ENCODE measurements at regions of chr21 and their contacts with region 1.

Region 1: GRCh38 chr21:33199516-33200217 is 30.1 kb upstream of the IFNAR2 start:
- DNase-seq: peak; percentile 94
- H3K4me3 ChIP-seq: no peak overlapping the region
- H3K27ac ChIP-seq: peak overlapping the region; percentile 45
- H3K4me1 ChIP-seq: peaks cover 50% of the 10 kb centered on the region
- CTCF ChIP-seq: peak; percentile 97

Region 2: GRCh38 chr21:32653311-32653901 is 546.3 kb before region 1 on chr21:
- CTCF ChIA-PET with region 1: no interaction called
- POLR2A ChIA-PET with region 1: no interaction called
- intact Hi-C with region 1: loop called (anchors 10 kb)
- DNase-seq: peak; percentile 37
- H3K4me3 ChIP-seq: no peak overlapping the region
- H3K27ac ChIP-seq: no peak overlapping the region
- H3K4me1 ChIP-seq: peaks cover 5% of the 10 kb centered on the region
- CTCF ChIP-seq: peak; percentile 91

Region 3: DNA sequence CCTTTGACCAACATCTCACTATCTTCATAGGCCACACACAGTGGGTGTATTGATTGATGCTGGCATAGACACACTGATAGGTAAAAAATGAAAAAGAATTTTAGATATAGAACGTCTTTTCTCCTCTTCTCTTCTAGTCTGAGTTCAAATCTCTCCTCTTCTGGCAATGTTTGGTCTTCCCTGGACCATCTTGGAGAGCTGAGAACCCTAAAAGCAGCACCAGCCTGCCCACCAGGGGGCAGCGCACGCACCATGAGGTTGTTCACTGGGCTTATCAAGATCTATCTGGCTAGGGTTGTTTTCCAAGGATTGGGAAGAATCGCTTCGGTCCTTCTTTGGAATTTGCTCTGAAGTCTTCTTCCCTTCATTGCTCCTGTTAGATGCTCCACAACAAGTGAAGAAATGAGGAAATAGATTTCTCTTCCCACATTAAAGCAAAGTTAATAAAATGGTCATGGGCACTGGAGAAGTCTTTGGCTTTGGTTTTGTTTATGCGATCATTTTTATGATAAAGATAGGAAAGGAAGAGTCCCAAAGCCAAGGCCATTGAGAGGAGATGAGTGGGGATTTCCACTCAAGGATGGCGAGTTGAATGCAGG is 277.9 kb before region 1 on chr21:
- CTCF ChIA-PET with region 1: no interaction called
- POLR2A ChIA-PET with region 1: no interaction called
- intact Hi-C with region 1: loop called (anchors 5 kb)
- DNase-seq: peak; percentile 40
- H3K4me3 ChIP-seq: no peak overlapping the region
- H3K27ac ChIP-seq: no peak overlapping the region
- H3K4me1 ChIP-seq: no peaks in the 10 kb centered on the region
- CTCF ChIP-seq: peak; percentile 91

Region 4: DNA sequence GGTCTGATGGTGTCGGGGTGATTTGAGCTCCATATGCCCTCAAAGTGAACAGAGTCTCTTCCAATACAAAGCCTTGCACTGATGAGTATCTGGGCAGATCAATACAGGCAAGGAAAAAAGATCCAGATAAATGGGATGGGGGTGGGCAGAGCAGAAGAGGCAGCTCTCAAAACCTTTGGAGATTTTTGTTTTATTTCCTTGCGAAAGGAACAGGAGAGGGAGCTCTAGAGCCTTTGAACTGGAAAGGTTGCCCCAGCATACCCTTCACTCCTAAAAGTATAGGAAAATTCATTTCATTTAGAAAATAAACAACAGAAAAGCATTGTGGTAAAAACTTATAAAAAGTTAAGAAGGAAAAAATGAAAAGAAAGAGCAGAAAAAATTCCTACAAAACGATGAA is 205.4 kb before region 1 on chr21:
- CTCF ChIA-PET with region 1: no interaction called
- POLR2A ChIA-PET with region 1: no interaction called
- intact Hi-C with region 1: loop called (anchors 2 kb)
- DNase-seq: peak; percentile 18
- H3K4me3 ChIP-seq: no peak overlapping the region
- H3K27ac ChIP-seq: no peak overlapping the region
- H3K4me1 ChIP-seq: no peaks in the 10 kb centered on the region
- CTCF ChIP-seq: peak; percentile 71

Region 5: GRCh38 chr21:33308586-33309490 is 109.2 kb after region 1 on chr21:
- CTCF ChIA-PET with region 1: no interaction called
- POLR2A ChIA-PET with region 1: interaction called, 3 read pairs
- intact Hi-C with region 1: loop called (anchors 2 kb)
- DNase-seq: peak; percentile 100
- H3K4me3 ChIP-seq: peak overlapping the region; percentile 42
- H3K27ac ChIP-seq: peak overlapping the region; percentile 99
- H3K4me1 ChIP-seq: peaks cover 100% of the 10 kb centered on the region
- CTCF ChIP-seq: peak; percentile 80

Region 6: DNA sequence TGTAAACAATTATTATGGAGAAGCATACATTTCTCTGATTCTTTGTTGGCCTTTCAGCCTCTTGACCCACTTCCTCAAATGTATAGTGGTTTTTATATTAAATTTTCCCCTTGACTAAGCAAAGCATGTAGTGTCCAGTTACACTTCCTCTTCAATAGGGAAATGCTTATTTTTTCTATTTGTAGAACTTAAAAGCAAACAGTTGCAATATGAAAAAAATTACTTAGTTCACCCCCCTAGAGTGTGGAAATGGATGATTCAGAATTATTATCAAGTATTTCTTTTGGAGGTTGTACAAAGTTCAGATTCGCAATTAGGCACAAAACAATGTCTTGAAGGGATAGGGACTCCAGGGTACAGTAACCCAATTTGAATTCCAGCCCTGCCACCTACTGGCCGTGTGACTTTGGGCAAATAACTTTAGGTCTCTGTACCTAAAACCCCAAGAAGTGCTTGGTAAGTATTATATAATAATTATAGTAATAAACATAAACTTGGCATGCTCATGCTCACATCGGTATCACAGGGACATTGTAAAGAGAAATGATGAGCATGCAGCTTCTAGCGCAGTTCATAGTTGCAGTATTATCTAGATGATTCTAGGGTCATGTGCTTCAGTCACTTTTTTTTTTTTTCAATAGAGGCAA is 174.9 kb after region 1 on chr21:
- CTCF ChIA-PET with region 1: no interaction called
- POLR2A ChIA-PET with region 1: no interaction called
- intact Hi-C with region 1: loop called (anchors 1 kb)
- DNase-seq: peak; percentile 87
- H3K4me3 ChIP-seq: peak overlapping the region; percentile 50
- H3K27ac ChIP-seq: peak overlapping the region; percentile 96
- H3K4me1 ChIP-seq: peaks cover 76% of the 10 kb centered on the region
- CTCF ChIP-seq: peak; percentile 95

Measured in OCI-LY7 (cell line).